Dendritic cell treated with granulocyte-macrophage colony-stimulating factor and Interleukin-4, amounts not matched to agents 40 ng/mL and 50 ng/mL, for 4 days (primary cell): ENCODE measurements at regions of chr6 and their contacts with region 1.

Region 1: GRCh38 chr6:26175428-26176181 is 88.4 kb downstream of the HFE start:
- H3K4me3 Mint-ChIP-seq: no peak overlapping the region
- H3K27ac Mint-ChIP-seq: peak overlapping the region; percentile 43
- H3K4me1 Mint-ChIP-seq: peaks cover 29% of the 10 kb centered on the region
- H3K27me3 Mint-ChIP-seq: no peaks in the 10 kb centered on the region

Region 2: DNA sequence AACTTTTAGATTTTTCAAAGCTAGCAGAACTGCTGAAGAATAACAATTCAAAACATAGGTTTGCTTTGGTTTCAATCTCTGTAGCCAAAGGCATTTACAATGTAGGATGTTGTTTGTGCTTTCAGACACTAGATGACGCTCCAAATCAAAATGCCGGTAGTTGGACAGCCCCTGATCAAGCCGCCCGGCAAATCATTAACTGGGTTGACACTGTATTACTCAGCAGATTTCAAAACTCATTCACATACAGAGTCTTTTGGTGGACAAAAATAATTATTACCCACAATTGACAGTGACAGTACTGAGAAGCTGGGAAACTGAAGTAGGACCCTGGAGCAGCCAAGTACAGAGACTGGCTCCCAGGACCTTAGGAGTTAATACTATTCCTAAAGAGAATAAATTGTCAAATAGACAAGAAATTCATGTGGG is 109.6 kb before region 1 on chr6:
- intact Hi-C with region 1: loop called (anchors 5 kb)
- H3K4me3 Mint-ChIP-seq: no peak overlapping the region
- H3K27ac Mint-ChIP-seq: peak overlapping the region; percentile 88
- H3K4me1 Mint-ChIP-seq: peaks cover 24% of the 10 kb centered on the region
- H3K27me3 Mint-ChIP-seq: peaks cover 2% of the 10 kb centered on the region

Region 3: DNA sequence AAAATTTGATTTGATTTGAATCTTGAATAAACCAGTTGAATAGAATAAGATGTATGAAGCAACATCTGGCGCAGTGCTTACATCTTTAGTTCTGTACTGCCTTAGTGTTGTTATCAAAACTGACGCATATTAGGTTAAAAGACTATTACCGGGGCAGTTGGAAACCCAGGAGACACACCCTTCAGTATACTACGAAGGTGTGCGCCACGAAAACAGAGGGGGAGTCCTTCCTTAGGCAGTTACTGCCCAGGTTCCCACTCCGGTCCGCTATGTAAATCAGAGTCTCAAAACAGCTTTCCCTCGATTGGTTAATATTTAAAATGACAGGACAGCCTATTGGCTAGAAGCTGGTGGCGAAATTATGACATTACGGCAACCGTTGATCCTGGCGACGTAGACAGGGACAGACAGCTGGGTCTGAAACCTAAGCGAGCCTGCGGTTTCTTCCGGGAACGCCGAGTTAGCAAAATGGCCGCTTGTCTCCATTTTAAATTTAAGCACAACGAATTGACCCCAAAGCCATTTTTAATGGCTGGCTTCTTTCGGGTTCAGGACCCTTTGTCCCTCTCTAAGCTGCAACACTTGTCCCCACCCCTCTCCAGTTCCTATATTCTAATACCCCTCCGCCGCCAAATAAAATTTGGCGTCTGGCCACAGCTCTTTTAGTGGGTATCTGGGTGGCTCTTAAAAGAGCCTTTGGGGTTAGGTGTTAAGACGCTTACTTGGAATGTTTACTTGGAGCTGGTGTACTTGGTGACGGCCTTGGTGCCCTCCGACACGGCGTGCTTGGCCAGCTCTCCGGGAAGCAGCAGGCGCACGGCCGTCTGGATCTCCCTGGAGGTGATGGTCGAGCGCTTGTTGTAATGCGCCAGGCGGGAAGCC is 52.6 kb before region 1 on chr6:
- intact Hi-C with region 1: loop called (anchors 5 kb)
- H3K4me3 Mint-ChIP-seq: peak overlapping the region; percentile 95
- H3K27ac Mint-ChIP-seq: peak overlapping the region; percentile 100
- H3K4me1 Mint-ChIP-seq: peaks cover 23% of the 10 kb centered on the region
- H3K27me3 Mint-ChIP-seq: no peaks in the 10 kb centered on the region

Region 4: DNA sequence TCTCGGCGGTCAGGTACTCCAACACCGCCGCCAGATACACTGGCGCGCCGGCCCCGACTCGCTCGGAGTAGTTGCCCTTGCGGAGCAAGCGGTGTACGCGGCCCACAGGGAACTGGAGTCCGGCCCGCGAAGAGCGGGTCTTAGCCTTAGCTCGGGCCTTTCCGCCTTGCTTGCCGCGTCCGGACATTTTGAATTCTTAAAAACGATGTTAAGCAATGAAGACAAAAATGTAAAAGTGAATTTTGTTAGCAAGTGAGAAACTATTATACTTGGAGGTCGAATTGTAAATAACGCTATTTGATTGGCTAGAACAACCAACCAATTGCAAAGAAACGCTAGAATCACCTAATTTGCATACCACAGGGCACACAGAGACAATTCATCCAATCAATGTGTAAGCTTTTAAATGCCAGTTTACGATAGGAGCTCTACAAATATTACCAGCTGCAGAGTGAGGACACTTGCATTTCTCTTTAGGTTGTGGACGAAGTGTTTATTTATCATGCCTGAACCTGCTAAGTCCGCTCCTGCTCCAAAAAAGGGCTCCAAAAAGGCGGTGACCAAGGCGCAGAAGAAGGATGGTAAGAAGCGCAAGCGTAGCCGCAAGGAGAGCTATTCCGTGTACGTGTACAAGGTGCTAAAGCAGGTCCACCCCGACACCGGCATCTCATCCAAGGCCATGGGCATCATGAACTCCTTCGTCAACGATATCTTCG is 23.6 kb after region 1 on chr6:
- intact Hi-C with region 1: loop called (anchors 2 kb)
- H3K4me3 Mint-ChIP-seq: peak overlapping the region; percentile 84
- H3K27ac Mint-ChIP-seq: peak overlapping the region; percentile 99
- H3K4me1 Mint-ChIP-seq: peaks cover 25% of the 10 kb centered on the region
- H3K27me3 Mint-ChIP-seq: no peaks in the 10 kb centered on the region

Region 5: GRCh38 chr6:26596579-26597388 is 421.2 kb after region 1 on chr6 and contains the start of gene ABT1:
- intact Hi-C with region 1: loop called (anchors 5 kb)
- H3K4me3 Mint-ChIP-seq: no peak within 1 kb of the TSS
- H3K27ac Mint-ChIP-seq: no peak within 1 kb of the TSS
- H3K4me1 Mint-ChIP-seq: peaks cover 30% of the 10 kb centered on the region
- H3K27me3 Mint-ChIP-seq: peaks cover 24% of the 10 kb centered on the region